ENCODE measurements at regions of chr5 and their contacts with region 1.

Region 1: DNA sequence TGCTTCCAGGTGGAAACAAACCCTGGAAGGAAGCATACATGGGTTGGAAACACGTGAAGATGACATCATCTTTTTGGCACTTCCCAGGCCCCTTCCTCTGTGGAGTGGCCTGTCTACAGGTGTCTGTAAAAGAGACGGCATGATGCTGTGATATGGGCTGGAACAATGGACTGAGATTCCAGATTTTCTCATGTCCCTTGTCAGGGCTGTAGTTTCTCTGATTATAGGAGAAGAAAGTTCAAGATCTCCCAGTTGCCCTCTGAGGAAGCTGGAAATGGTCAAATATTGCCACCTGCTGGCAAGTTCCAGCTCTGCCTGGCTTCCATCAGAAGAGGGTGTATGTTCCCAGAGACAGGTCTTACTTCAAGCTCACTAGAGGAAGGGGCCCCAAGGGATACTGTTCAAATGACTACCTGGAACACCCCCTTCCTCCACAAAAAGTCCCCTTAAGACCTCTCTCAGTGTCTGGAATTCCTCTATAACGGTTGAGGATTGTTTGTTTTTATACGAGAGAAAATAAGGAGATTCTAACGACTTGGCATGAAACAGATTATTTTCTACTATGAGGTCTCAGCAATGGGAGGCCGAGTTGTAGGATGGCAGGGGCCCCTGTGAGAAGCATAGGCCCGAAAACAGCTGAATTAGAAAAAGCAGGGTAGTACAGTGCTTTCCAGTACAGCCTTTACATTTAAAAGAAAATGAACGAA is 7.3 kb upstream of the ANXA6 start:
- DNase-seq: peak; percentile 87
- H3K4me3 Mint-ChIP-seq: no peak overlapping the region
- H3K27ac Mint-ChIP-seq: peak overlapping the region; percentile 58
- H3K4me1 Mint-ChIP-seq: peaks cover 11% of the 10 kb centered on the region
- H3K27me3 Mint-ChIP-seq: no peaks in the 10 kb centered on the region

Region 2: DNA sequence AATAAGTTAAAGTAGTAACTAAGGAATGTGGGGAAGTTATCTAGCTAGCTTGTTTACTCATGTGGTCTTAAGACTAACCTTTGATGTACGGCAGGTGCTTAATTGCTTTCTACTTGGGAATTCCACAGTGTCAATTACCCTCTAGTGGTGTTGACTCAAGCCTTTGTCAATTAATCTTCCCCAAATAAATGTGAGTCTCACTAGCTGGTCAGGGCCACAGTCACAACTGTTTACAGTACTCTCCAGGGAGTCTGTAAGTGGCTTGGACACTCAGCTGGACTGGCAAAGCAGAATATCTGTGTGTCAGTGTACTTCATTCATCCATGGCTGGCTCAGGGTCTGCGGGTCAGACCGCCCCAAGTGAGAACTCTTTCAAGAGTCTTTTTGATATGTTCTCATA is 355.5 kb before region 1 on chr5:
- CTCF ChIA-PET with region 1: no interaction called
- POLR2A ChIA-PET with region 1: no interaction called
- DNase-seq: no peak
- H3K4me3 Mint-ChIP-seq: no peak overlapping the region
- H3K27ac Mint-ChIP-seq: no peak overlapping the region
- H3K4me1 Mint-ChIP-seq: peaks cover under 1% of the 10 kb centered on the region
- H3K27me3 Mint-ChIP-seq: peaks cover 2% of the 10 kb centered on the region

Region 3: DNA sequence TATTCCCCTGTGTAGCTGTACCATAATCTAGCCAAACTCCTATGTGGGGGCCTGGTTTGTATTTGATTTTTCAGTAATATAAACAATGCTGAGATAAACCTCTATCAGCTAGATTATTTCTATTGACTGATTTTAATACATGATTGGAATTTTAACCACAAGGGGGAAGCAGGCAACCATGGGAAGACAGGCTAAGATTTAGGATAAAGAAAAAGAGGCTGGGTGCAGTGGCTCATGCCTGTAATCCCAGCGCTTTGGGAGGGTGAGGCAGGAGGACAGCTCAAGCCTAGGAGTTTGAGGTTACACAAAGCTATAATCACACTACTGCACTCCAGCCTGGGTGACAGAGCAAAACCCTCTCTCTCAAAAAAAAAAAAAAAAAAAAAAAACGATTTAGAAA is 162.6 kb before region 1 on chr5:
- CTCF ChIA-PET with region 1: no interaction called
- POLR2A ChIA-PET with region 1: no interaction called
- DNase-seq: no peak
- H3K4me3 Mint-ChIP-seq: no peak overlapping the region
- H3K27ac Mint-ChIP-seq: no peak overlapping the region
- H3K4me1 Mint-ChIP-seq: no peaks in the 10 kb centered on the region
- H3K27me3 Mint-ChIP-seq: no peaks in the 10 kb centered on the region

Region 4: GRCh38 chr5:151115274-151115905 is 49.4 kb before region 1 on chr5:
- CTCF ChIA-PET with region 1: interaction called, 126 read pairs
- POLR2A ChIA-PET with region 1: no interaction called
- DNase-seq: peak; percentile 72
- H3K4me3 Mint-ChIP-seq: no peak overlapping the region
- H3K27ac Mint-ChIP-seq: no peak overlapping the region
- H3K4me1 Mint-ChIP-seq: peaks cover 2% of the 10 kb centered on the region
- H3K27me3 Mint-ChIP-seq: no peaks in the 10 kb centered on the region

Region 5: GRCh38 chr5:151134238-151134637 is 30.6 kb before region 1 on chr5:
- CTCF ChIA-PET with region 1: interaction called, 18 read pairs
- POLR2A ChIA-PET with region 1: no interaction called
- DNase-seq: no peak
- H3K4me3 Mint-ChIP-seq: no peak overlapping the region
- H3K27ac Mint-ChIP-seq: no peak overlapping the region
- H3K4me1 Mint-ChIP-seq: peaks cover 56% of the 10 kb centered on the region
- H3K27me3 Mint-ChIP-seq: no peaks in the 10 kb centered on the region

Region 6: GRCh38 chr5:151183451-151184245 is 18.8 kb after region 1 on chr5:
- CTCF ChIA-PET with region 1: interaction called, 23 read pairs
- POLR2A ChIA-PET with region 1: no interaction called
- DNase-seq: no peak
- H3K4me3 Mint-ChIP-seq: no peak overlapping the region
- H3K27ac Mint-ChIP-seq: no peak overlapping the region
- H3K4me1 Mint-ChIP-seq: peaks cover 1% of the 10 kb centered on the region
- H3K27me3 Mint-ChIP-seq: no peaks in the 10 kb centered on the region

Measured in activated CD4-positive, alpha-beta T cell treated with anti-CD3 and anti-CD28 coated beads, Interleukin-2, amount 10 ng/mL, durations not matched to agents 7 days and 5 days (primary cell).